ENCODE measurements at regions of chr10 and their contacts with region 1.

Region 1: GRCh38 chr10:70272925-70273316 is 10.9 kb downstream of the NPFFR1 start:
- DNase-seq: peak; percentile 20
- ATAC-seq: peak; percentile 92
- H3K4me3 Mint-ChIP-seq: no peak overlapping the region
- H3K27ac Mint-ChIP-seq: no peak overlapping the region
- H3K4me1 Mint-ChIP-seq: peaks cover 23% of the 10 kb centered on the region
- H3K27me3 Mint-ChIP-seq: no peaks in the 10 kb centered on the region

Region 2: GRCh38 chr10:70162892-70163201 is 110.1 kb before region 1 on chr10:
- CTCF ChIA-PET with region 1: no interaction called
- POLR2A ChIA-PET with region 1: no interaction called
- intact Hi-C with region 1: loop called in 1 of 2 experiments (anchors 2 kb)
- DNase-seq: peak; percentile 84
- ATAC-seq: peak; percentile 87
- H3K4me3 Mint-ChIP-seq: peak overlapping the region; percentile 60
- H3K27ac Mint-ChIP-seq: peak overlapping the region; percentile 90
- H3K4me1 Mint-ChIP-seq: peaks cover 74% of the 10 kb centered on the region
- H3K27me3 Mint-ChIP-seq: no peaks in the 10 kb centered on the region

Region 3: GRCh38 chr10:70169649-70170364 is 103.1 kb before region 1 on chr10:
- CTCF ChIA-PET with region 1: no interaction called
- POLR2A ChIA-PET with region 1: interaction called, 5 read pairs
- intact Hi-C with region 1: loop called in 1 of 2 experiments (anchors 2 kb)
- DNase-seq: no peak
- ATAC-seq: peak; percentile 5
- H3K4me3 Mint-ChIP-seq: peak overlapping the region; percentile 94
- H3K27ac Mint-ChIP-seq: peak overlapping the region; percentile 84
- H3K4me1 Mint-ChIP-seq: peaks cover 64% of the 10 kb centered on the region
- H3K27me3 Mint-ChIP-seq: no peaks in the 10 kb centered on the region

Region 4: GRCh38 chr10:70221030-70221429 is 51.9 kb before region 1 on chr10:
- CTCF ChIA-PET with region 1: interaction called, 15 read pairs
- POLR2A ChIA-PET with region 1: interaction called, 3 read pairs
- intact Hi-C with region 1: loop called in 1 of 2 experiments (anchors 2 kb)
- DNase-seq: no peak
- ATAC-seq: no peak
- H3K4me3 Mint-ChIP-seq: no peak overlapping the region
- H3K27ac Mint-ChIP-seq: no peak overlapping the region
- H3K4me1 Mint-ChIP-seq: peaks cover 36% of the 10 kb centered on the region
- H3K27me3 Mint-ChIP-seq: no peaks in the 10 kb centered on the region

Region 5: GRCh38 chr10:70355051-70356021 is 82.4 kb after region 1 on chr10:
- CTCF ChIA-PET with region 1: interaction called, 5 read pairs
- POLR2A ChIA-PET with region 1: no interaction called
- intact Hi-C with region 1: loop called in 1 of 2 experiments (anchors 2 kb)
- DNase-seq: peak; percentile 50
- ATAC-seq: peak; percentile 80
- H3K4me3 Mint-ChIP-seq: peak overlapping the region; percentile 7
- H3K27ac Mint-ChIP-seq: peak overlapping the region; percentile 69
- H3K4me1 Mint-ChIP-seq: peaks cover 24% of the 10 kb centered on the region
- H3K27me3 Mint-ChIP-seq: no peaks in the 10 kb centered on the region